ENCODE measurements at regions of chr1 and their contacts with region 1.

Region 1: GRCh38 chr1:184754476-184755225 is at the start of gene EDEM3:
- DNase-seq: peak; percentile 94 to 100 (median 97)
- ATAC-seq: peak; percentile 92
- H3K4me3 ChIP-seq: peak within 1 kb of the TSS; percentile 80 to 91
- H3K4me3 Mint-ChIP-seq: peak within 1 kb of the TSS; percentile 93
- H3K27ac ChIP-seq: peak within 1 kb of the TSS; percentile 80 to 84
- H3K27ac Mint-ChIP-seq: peak within 1 kb of the TSS; percentile 97
- H3K4me1 ChIP-seq: peaks cover 22% of the 10 kb centered on the region
- H3K4me1 Mint-ChIP-seq: peaks cover 50% of the 10 kb centered on the region
- H3K27me3 ChIP-seq: no peaks in the 10 kb centered on the region
- H3K27me3 Mint-ChIP-seq: no peaks in the 10 kb centered on the region
- CTCF ChIP-seq: no peak
- total RNA-seq, gene EDEM3: 9.3 to 14.8 TPM

Region 2: GRCh38 chr1:184386312-184387068 is 368.2 kb before region 1 on chr1 and contains the start of gene C1orf21:
- CTCF ChIA-PET with region 1: no interaction called
- POLR2A ChIA-PET with region 1: no interaction called
- intact Hi-C with region 1: loop called in 1 of 2 experiments (anchors 10 kb)
- DNase-seq: peak; percentile 40 to 89 (median 66)
- ATAC-seq: peak; percentile 83
- H3K4me3 ChIP-seq: peak within 1 kb of the TSS; percentile 59 to 74
- H3K4me3 Mint-ChIP-seq: peak within 1 kb of the TSS; percentile 84
- H3K27ac ChIP-seq: peak within 1 kb of the TSS; percentile 63 to 88
- H3K27ac Mint-ChIP-seq: peak within 1 kb of the TSS; percentile 83
- H3K4me1 ChIP-seq: peaks cover 10% of the 10 kb centered on the region
- H3K4me1 Mint-ChIP-seq: peaks cover 18% of the 10 kb centered on the region
- H3K27me3 ChIP-seq: peaks cover 2 to 7% of the 10 kb centered on the region in 2 experiments
- H3K27me3 Mint-ChIP-seq: peaks cover 38% of the 10 kb centered on the region
- CTCF ChIP-seq: no peak
- total RNA-seq, gene C1orf21: 2.3 to 3.5 TPM

Region 3: GRCh38 chr1:184743062-184743756 is 11.4 kb before region 1 on chr1:
- CTCF ChIA-PET with region 1: interaction called, 3 read pairs
- POLR2A ChIA-PET with region 1: interaction called, 13 read pairs
- intact Hi-C with region 1: loop called (anchors 1 kb)
- DNase-seq: peak in 4 of 9 experiments; percentile 15 to 85 (median 48)
- ATAC-seq: peak; percentile 97
- H3K4me3 ChIP-seq: no peak overlapping the region
- H3K4me3 Mint-ChIP-seq: peak overlapping the region; percentile 69
- H3K27ac ChIP-seq: peak overlapping the region; percentile 18 to 28
- H3K27ac Mint-ChIP-seq: peak overlapping the region; percentile 96
- H3K4me1 ChIP-seq: peaks cover 48% of the 10 kb centered on the region
- H3K4me1 Mint-ChIP-seq: peaks cover 68% of the 10 kb centered on the region
- H3K27me3 ChIP-seq: no peaks in the 10 kb centered on the region
- H3K27me3 Mint-ChIP-seq: no peaks in the 10 kb centered on the region
- CTCF ChIP-seq: no peak

Region 4: DNA sequence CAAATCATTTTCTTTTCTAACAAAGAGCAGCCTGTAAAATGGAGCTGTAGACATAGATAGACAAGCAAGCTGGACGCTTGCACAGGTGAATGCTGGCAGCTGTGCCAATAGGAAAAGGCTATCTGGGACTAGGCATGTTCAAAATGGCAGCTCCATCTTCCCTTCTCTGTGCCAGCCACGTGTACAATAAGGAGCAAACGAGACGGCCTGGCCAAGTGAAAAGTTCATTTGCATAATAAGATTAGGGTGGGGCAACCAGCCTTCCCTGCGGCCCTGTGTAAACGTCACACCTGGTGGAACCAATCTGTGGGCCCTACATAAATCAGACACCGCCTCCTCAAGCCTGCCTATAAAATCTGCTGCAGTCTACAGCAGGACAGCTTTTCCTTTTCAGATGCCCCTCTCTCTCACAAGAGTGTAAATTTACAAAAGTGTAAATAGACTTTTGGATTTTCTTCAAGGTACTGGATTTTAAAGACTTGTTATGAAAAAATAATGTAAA is 16.6 kb after region 1 on chr1:
- CTCF ChIA-PET with region 1: no interaction called
- POLR2A ChIA-PET with region 1: no interaction called
- intact Hi-C with region 1: no loop called
- DNase-seq: no peak
- ATAC-seq: no peak
- H3K4me3 ChIP-seq: no peak overlapping the region
- H3K4me3 Mint-ChIP-seq: no peak overlapping the region
- H3K27ac ChIP-seq: no peak overlapping the region
- H3K27ac Mint-ChIP-seq: no peak overlapping the region
- H3K4me1 ChIP-seq: no peaks in the 10 kb centered on the region
- H3K4me1 Mint-ChIP-seq: no peaks in the 10 kb centered on the region
- H3K27me3 ChIP-seq: no peaks in the 10 kb centered on the region
- H3K27me3 Mint-ChIP-seq: no peaks in the 10 kb centered on the region
- CTCF ChIP-seq: no peak

Region 5: DNA sequence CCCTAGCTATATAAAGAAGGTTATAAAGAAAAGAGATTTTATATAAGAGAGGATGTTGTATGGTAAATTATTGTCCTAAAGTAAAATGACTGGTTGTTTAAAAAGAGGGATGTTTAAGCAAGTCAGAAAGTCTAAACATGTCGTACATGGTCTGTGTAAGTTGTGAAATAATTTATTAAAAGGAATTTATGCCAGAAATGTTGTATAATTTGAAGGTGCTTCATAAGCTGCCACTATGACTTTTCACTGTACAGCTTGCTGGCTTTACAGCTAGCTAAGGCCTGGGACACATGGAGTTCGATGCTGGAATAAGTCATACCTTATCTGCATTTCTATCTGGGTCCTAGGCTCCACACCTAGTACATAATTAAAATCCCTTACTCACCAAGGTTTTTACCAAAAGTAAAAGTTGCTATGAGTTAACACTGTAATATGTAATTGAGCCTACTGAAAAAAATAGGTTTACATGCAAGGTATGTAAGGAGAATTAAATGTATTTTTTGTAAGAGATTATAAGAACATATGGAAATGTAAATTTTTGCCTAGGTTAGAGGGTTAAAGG is 59.0 kb after region 1 on chr1:
- CTCF ChIA-PET with region 1: no interaction called
- POLR2A ChIA-PET with region 1: no interaction called
- intact Hi-C with region 1: no loop called
- DNase-seq: no peak
- ATAC-seq: no peak
- H3K4me3 ChIP-seq: no peak overlapping the region
- H3K4me3 Mint-ChIP-seq: no peak overlapping the region
- H3K27ac ChIP-seq: no peak overlapping the region
- H3K27ac Mint-ChIP-seq: no peak overlapping the region
- H3K4me1 ChIP-seq: no peaks in the 10 kb centered on the region
- H3K4me1 Mint-ChIP-seq: no peaks in the 10 kb centered on the region
- H3K27me3 ChIP-seq: no peaks in the 10 kb centered on the region
- H3K27me3 Mint-ChIP-seq: no peaks in the 10 kb centered on the region
- CTCF ChIP-seq: no peak

Region 6: DNA sequence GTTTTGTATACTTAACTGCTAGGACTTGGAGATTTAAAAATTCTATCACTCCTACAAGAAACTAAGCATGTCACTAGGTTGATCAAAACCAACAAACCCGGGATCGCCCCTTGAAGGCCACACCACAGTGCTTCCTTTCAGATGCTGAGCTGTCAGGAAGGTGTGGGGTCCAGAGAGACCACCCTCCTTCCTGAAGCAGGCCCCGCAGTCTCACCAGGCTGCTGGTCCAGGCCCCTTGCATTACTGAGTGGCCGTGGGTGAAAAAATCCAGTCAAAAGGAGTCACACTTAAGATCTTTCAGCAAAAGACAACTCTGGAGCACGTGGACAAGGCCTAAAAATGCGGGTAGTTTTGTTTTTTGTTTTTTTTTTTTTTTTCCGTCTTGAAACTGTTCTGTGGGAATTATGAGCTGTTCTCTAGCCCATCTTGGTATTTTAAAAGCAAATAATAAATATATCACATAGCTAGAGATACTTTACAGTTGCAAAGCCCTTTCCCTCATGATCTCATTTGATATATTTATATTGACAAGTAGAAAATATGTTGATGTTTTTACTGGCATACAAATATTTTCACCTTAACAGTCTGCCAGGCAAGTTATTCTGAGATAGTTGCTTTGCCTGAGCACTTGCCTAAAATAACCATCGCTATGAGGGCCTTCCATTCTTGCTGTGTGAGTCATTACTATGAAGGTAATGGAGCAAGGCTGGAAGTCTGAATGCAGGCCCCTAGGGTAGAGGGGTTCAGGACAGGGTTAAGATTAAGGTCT is 73.1 kb after region 1 on chr1:
- CTCF ChIA-PET with region 1: no interaction called
- POLR2A ChIA-PET with region 1: no interaction called
- intact Hi-C with region 1: no loop called
- DNase-seq: no peak
- ATAC-seq: no peak
- H3K4me3 ChIP-seq: no peak overlapping the region
- H3K4me3 Mint-ChIP-seq: no peak overlapping the region
- H3K27ac ChIP-seq: no peak overlapping the region
- H3K27ac Mint-ChIP-seq: no peak overlapping the region
- H3K4me1 ChIP-seq: no peaks in the 10 kb centered on the region
- H3K4me1 Mint-ChIP-seq: no peaks in the 10 kb centered on the region
- H3K27me3 ChIP-seq: no peaks in the 10 kb centered on the region
- H3K27me3 Mint-ChIP-seq: no peaks in the 10 kb centered on the region
- CTCF ChIP-seq: no peak

Region 7: GRCh38 chr1:185044981-185045813 is 290.5 kb after region 1 on chr1 and contains the start of gene RNF2:
- CTCF ChIA-PET with region 1: interaction called, 3 read pairs
- POLR2A ChIA-PET with region 1: interaction called, 4 read pairs
- intact Hi-C with region 1: loop called (anchors 1 to 5 kb)
- DNase-seq: peak; percentile 61 to 95 (median 84)
- ATAC-seq: peak; percentile 91
- H3K4me3 ChIP-seq: peak within 1 kb of the TSS; percentile 74 to 85
- H3K4me3 Mint-ChIP-seq: peak within 1 kb of the TSS; percentile 92
- H3K27ac ChIP-seq: peak within 1 kb of the TSS; percentile 62 to 81
- H3K27ac Mint-ChIP-seq: peak within 1 kb of the TSS; percentile 93
- H3K4me1 ChIP-seq: peaks cover 23% of the 10 kb centered on the region
- H3K4me1 Mint-ChIP-seq: peaks cover 46% of the 10 kb centered on the region
- H3K27me3 ChIP-seq: no peaks in the 10 kb centered on the region
- H3K27me3 Mint-ChIP-seq: no peaks in the 10 kb centered on the region
- CTCF ChIP-seq: no peak
- total RNA-seq, gene RNF2: 13.3 to 13.6 TPM

Region 8: DNA sequence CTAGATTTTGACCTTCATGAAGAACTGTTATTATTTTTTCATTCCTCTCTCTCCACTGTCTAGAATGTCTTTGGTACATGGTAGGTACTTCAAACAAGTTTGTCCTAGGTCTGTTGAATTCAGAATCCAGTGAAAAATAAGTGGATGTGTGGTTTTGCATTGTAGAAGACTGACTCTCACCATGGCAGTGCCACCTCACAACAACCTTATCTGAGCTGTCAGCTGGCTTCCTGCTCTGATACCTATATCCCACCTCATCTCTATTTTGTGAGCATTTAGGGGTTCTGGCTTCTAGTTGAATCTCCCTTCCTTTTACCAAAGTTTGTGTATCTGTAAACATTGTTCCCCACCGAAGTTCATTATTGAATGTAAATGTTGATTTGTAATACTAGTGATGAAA is 411.5 kb after region 1 on chr1:
- CTCF ChIA-PET with region 1: no interaction called
- POLR2A ChIA-PET with region 1: no interaction called
- intact Hi-C with region 1: no loop called
- DNase-seq: no peak
- ATAC-seq: no peak
- H3K4me3 ChIP-seq: no peak overlapping the region
- H3K4me3 Mint-ChIP-seq: no peak overlapping the region
- H3K27ac ChIP-seq: no peak overlapping the region
- H3K27ac Mint-ChIP-seq: no peak overlapping the region
- H3K4me1 ChIP-seq: no peaks in the 10 kb centered on the region
- H3K4me1 Mint-ChIP-seq: peaks cover 3% of the 10 kb centered on the region
- H3K27me3 ChIP-seq: no peaks in the 10 kb centered on the region
- H3K27me3 Mint-ChIP-seq: no peaks in the 10 kb centered on the region
- CTCF ChIP-seq: no peak

Region 9: DNA sequence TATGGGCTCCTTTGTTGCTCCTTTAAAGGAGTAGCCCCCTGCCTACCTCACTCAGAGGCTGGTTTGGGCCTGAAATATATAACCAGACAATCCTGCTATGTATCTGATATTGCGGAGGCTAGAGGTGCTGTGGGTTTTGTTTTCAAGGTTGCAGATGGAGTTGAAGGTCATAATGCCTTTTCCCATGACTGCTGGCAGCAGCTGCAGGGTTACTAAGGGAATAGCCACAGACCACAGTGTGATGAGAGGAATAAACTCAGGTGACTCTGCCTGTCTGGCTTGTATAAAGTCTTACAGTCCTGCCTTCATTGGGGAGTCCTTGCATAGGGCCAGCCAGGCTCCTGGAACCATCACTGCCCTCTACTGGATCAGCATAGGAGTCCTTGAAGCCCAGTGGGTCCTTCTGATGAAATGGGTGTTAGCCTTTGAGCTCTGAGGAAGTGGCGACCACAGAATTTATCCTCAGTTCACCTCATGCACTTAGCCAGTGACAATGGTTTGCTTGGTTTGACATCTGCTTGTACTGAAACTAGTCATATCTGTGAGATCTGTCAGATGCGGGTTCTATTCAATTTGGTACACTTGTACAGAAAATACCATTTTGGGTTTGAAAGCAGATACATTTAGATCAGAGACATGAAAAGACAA is 805.2 kb after region 1 on chr1:
- CTCF ChIA-PET with region 1: no interaction called
- POLR2A ChIA-PET with region 1: no interaction called
- intact Hi-C with region 1: loop called (anchors 10 kb)
- DNase-seq: peak; percentile 8 to 85 (median 51)
- ATAC-seq: peak; percentile 69
- H3K4me3 ChIP-seq: no peak overlapping the region
- H3K4me3 Mint-ChIP-seq: peak overlapping the region; percentile 40
- H3K27ac ChIP-seq: peak overlapping the region in 1 of 2 experiments; percentile 63
- H3K27ac Mint-ChIP-seq: peak overlapping the region; percentile 70
- H3K4me1 ChIP-seq: peaks cover 30% of the 10 kb centered on the region
- H3K4me1 Mint-ChIP-seq: peaks cover 48% of the 10 kb centered on the region
- H3K27me3 ChIP-seq: no peaks in the 10 kb centered on the region
- H3K27me3 Mint-ChIP-seq: no peaks in the 10 kb centered on the region
- CTCF ChIP-seq: no peak

Measured in CD8-positive, alpha-beta T cell (primary cell).